Activated T-helper 2 cell treated with anti-CD3 and anti-CD28 coated beads, Interferon-gamma antibody, Interleukin-2, Interleukin-4, amounts not matched to agents 10 μg/mL and 5 μg/mL and 100 μg/mL, durations not matched to agents 14 hours and 24 hours and 36 hours (primary cell): ENCODE measurements at regions of chr1 and their contacts with region 1.

Region 1: DNA sequence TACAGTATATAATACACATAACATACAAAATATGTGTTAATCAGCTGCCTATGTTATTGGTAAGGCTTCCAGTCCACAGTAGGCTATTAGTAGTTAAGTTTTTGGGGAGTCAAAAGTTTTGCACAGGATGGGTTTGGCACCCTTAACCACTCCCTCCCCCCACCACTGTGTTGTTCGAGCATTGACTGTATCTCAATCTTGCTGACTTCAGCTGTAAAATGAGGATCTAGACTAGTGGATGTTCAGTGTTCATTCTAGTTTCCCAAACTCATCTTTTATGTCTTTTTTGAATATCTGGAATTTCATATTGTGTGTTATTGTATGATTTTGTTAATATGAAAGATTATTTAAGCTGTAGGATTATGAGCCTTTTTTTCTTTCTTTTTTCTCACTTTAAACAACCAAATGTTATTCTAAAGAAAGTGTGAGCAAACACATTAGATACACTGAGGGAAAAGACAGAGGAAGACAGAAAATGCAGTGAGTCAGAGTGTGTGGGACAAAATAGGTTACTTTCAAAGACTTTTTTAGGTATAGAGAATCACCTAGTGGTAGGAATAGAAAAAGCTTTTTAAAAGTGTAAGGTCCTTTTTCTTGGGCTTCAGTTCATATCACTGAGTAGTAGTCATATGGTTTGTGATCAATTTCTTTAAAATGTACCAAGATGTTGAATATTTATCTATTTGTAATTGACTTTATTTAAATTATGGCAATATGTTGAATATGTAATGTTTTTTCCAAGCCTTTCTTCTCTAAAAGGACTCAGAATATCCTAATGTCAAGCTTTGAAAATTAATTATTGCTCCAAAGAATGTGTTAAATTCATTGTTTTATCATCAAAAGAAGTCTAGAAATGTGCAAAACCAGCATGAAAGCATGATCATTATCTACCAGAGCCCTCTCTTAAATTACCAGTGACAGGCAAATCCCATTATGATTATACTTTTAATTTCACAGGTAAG is 17.9 kb upstream of the CENPF start:
- DNase-seq: no peak
- H3K4me3 Mint-ChIP-seq: no peak overlapping the region
- H3K27ac Mint-ChIP-seq: peak overlapping the region; percentile 70
- H3K4me1 Mint-ChIP-seq: peaks cover 19% of the 10 kb centered on the region
- H3K27me3 Mint-ChIP-seq: no peaks in the 10 kb centered on the region

Region 2: GRCh38 chr1:214213136-214213535 is 371.9 kb before region 1 on chr1:
- intact Hi-C with region 1: loop called (anchors 5 kb)
- DNase-seq: no peak
- H3K4me3 Mint-ChIP-seq: no peak overlapping the region
- H3K27ac Mint-ChIP-seq: no peak overlapping the region
- H3K4me1 Mint-ChIP-seq: peaks cover 3% of the 10 kb centered on the region
- H3K27me3 Mint-ChIP-seq: peaks cover 31% of the 10 kb centered on the region

Region 3: DNA sequence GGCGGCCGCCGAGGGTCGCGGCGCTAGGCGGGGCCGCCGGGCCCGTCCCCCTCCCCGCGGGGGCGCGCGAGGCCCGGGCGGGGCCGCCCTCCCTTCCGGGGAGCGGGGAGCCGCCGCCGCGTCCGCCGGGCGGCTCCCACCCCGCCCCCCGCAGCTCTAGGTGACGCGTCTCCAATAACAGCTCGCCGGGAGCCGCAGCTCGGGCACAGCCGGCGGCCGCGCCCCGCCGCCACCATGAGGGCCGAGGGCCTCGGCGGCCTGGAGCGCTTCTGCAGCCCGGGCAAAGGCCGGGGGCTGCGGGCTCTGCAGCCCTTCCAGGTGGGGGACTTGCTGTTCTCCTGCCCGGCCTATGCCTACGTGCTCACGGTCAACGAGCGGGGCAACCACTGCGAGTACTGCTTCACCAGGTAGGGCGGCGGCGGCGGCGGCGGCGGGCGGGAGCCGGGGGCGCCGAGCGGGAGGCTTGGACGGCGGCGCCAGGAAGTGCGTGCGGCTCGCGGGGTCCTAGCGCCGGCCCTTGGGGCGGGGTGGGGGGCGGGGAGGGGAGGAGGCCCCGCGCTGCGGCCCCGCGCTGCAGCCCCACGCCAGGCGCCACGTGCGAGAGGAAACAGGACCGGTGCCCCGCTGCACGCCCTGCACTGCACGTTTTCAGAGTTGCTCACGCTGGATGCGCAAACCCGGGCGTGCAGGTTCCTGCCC is 303.9 kb before region 1 on chr1 and contains the start of gene SMYD2:
- intact Hi-C with region 1: loop called (anchors 5 kb)
- DNase-seq: peak; percentile 64
- H3K4me3 Mint-ChIP-seq: peak within 1 kb of the TSS; percentile 94
- H3K27ac Mint-ChIP-seq: peak within 1 kb of the TSS; percentile 75
- H3K4me1 Mint-ChIP-seq: peaks cover 32% of the 10 kb centered on the region
- H3K27me3 Mint-ChIP-seq: no peaks in the 10 kb centered on the region
- total RNA-seq, gene SMYD2: 33.6 and 34.5 TPM in 2 replicates

Region 4: DNA sequence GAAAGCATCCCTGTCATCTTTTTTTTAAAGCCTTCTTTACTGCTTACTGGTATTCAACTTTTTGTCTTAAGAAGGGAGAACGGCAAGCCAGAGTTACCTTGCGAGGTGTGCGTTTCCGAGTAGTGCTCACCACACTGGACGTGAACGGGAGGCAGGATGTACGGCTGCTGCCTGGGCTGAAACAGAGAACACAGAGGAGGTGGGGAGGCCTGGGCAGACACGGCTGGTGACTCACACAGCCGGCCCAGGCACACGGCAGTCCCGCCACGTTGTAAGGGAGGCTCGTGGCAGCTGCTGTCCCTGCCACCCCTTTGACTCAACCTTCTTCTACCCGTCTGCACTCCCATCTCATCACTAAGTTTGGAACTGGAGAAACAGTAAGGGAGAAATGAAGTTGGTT is 198.3 kb before region 1 on chr1:
- intact Hi-C with region 1: loop called (anchors 2 kb)
- DNase-seq: peak; percentile 41
- H3K4me3 Mint-ChIP-seq: peak overlapping the region; percentile 55
- H3K27ac Mint-ChIP-seq: peak overlapping the region; percentile 92
- H3K4me1 Mint-ChIP-seq: peaks cover 58% of the 10 kb centered on the region
- H3K27me3 Mint-ChIP-seq: no peaks in the 10 kb centered on the region

Region 5: DNA sequence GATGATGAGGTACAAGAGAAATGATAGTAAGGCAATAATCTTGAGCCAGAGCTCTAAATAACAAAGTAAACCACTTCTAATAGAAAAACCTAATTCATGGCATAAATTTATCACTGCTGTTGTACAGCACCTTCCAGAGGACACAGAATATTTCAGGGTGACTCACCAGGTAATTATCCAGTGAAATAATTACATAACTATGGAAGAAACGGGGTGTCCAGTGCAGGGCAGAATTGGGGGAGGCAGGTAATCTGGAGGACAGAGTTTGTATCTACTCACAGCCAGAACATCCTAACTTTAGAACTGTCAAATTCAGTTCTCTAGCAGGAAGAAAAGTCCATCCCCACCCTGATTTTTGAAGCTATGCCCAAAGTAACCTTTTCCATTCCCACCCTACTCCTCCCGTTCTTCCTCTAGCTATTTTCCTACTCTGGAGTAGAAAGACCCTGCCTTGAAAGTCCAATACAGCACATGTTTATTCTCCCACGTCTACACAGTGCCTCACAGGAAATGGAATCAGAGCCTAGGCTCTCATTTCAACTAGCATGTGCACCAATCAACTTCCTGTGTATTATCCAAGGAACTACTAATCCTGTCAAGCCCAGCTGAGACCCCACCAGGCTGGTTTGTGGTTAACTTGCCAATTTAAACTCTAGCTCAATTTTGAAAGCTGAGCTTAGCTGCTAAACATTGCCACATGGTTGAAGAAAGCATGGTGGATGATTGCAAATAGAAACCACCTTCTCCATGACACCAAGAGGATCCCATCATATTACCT is 130.3 kb before region 1 on chr1:
- intact Hi-C with region 1: no loop called
- DNase-seq: no peak
- H3K4me3 Mint-ChIP-seq: peak overlapping the region; percentile 6
- H3K27ac Mint-ChIP-seq: peak overlapping the region; percentile 81
- H3K4me1 Mint-ChIP-seq: peaks cover 80% of the 10 kb centered on the region
- H3K27me3 Mint-ChIP-seq: no peaks in the 10 kb centered on the region